ENCODE measurements at regions of chr15 and their contacts with region 1.

Region 1: GRCh38 chr15:74768771-74769342 is 13.0 kb upstream of the CSK start:
- DNase-seq: no peak
- H3K4me3 ChIP-seq: peak overlapping the region; percentile 25
- CTCF ChIP-seq: peak; percentile 75

Region 2: DNA sequence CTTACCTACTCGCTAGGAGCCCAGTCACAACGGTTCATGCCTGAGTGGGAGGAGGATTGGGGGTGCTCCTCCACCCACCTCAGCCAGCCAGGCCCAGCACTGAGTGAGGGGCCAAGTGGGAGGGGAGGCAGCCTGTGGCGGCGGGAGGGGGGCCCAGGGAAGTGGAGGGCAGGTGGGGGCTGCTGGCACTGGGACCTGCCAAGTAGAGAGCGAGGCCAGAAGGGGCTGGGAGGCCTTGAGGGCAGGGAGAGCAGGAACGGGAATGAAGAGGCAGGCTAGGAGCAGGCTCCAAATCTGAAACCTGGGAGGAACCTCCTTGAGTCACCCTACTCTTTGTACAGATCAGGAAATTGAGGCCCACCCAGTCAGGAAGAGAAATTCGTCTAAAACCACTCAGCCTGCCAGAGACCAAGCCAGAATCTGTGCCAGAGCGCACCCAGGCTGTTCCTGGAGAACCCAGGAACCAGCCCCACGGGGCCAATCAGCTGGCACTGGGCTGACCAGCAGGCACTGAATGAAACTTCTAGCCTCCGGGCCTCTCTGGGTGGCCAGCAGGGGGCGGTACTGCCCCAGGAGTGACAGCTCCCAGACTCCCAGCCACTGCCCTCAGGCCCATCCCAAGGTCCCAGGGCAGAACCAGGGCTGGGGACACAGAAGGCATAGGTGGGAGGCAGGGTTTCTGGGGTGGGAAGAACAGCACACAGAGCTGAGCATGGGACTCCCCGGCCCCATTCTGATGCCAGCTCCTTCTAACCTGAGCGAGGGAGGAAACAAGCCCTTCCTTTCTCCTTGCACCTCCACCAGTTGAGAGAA is 386.6 kb before region 1 on chr15:
- CTCF ChIA-PET with region 1: interaction called, 12 read pairs
- POLR2A ChIA-PET with region 1: no interaction called
- DNase-seq: no peak
- H3K4me3 ChIP-seq: no peak overlapping the region
- CTCF ChIP-seq: peak; percentile 98

Region 3: DNA sequence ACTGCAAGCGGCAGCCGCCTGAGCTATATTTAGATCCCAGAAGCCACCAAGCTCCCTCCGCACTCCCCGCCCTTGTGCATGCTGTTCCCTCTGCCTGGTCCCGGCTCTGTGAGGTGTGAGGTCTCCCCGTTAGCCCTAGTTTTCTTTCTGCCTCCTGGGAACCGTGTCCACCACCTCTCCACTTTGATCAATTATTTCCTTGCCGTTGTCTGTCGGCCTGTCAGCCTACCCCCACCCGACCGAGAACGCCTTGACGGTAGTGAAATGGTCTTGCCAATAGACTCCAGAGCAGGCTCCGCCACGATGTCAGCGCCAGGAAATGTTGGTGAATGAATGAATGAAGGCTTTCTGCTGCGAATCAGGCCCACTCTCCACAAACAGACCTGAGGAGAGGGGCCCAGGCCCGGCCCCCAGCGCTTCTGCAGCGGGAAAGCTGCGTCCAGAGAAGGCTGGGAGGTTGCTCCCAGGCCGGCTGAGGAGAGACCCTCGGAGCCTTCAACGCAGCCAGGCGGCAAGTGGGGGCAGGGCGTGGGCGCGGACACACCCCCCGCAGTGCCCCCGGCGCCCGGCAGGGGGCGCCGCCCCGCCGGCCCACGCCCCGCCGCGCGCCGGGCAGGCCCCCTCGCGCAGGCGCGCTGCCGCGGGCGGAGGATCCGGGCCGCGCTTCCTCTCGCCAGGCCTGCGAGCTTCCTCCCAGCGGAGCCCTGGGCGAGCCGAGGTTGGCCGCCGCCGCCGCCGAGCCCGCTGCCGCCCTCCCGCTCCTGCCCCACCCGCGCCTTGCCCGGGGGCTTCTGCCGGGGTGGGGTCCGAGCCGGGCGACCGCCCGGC is 12.8 kb after region 1 on chr15 and contains the start of gene CSK:
- CTCF ChIA-PET with region 1: interaction called, 333 read pairs
- POLR2A ChIA-PET with region 1: no interaction called
- DNase-seq: no peak
- H3K4me3 ChIP-seq: peak within 1 kb of the TSS; percentile 78
- CTCF ChIP-seq: peak; percentile 57

Region 4: DNA sequence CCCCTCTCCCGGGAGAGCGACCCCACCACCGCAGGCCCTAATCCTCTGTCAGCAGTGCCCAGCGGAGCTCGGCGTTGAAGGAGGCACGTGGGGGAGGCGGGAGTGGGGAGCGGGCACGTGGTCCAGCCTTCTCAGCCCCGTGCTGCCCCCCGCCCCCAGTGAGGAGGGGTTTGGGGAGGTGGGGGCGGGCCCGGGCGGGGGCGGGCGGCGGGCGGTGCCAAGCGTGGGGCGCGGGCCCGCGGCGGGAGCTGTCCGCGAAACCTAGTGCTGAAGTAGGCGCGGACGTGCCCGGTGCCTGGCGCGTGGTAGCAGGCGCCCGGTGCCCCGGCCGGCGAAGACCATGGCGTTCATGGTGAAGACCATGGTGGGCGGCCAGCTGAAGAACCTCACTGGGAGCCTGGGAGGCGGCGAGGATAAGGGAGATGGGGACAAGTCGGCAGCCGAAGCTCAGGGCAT is 57.5 kb after region 1 on chr15 and contains the start of gene CPLX3:
- CTCF ChIA-PET with region 1: interaction called, 53 read pairs
- POLR2A ChIA-PET with region 1: no interaction called
- DNase-seq: no peak
- H3K4me3 ChIP-seq: no peak within 1 kb of the TSS
- CTCF ChIP-seq: no peak

Region 5: DNA sequence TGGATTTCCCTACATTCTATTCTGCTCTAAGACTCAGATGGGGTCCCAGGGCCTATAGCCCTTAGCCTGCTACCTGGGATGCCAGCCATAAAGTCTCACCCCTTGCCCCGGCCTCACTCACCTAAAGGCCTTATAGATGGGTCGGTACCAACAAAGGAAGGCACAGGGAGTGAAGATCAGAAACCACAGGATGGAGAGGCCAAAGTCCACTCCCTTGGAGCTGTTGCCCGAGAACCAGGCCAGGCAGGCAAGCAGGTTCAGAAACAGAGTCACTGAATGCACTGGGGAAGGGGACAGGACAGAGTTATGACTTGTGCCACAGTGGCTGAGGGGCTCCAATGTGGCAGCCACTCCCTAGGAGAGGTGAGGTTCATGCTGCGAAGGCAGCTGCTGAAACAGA is 81.5 kb after region 1 on chr15:
- CTCF ChIA-PET with region 1: interaction called, 41 read pairs
- POLR2A ChIA-PET with region 1: no interaction called
- DNase-seq: no peak
- H3K4me3 ChIP-seq: no peak overlapping the region
- CTCF ChIP-seq: no peak

Measured in AG04449 (cell line).